ENCODE measurements at regions of chr2 and their contacts with region 1.

Region 1: GRCh38 chr2:161586517-161587167 is 37.6 kb upstream of the SLC4A10 start:
- DNase-seq: no peak
- H3K4me3 Mint-ChIP-seq: no peak overlapping the region
- H3K27ac Mint-ChIP-seq: no peak overlapping the region
- H3K4me1 Mint-ChIP-seq: no peaks in the 10 kb centered on the region
- H3K27me3 Mint-ChIP-seq: no peaks in the 10 kb centered on the region

Region 2: DNA sequence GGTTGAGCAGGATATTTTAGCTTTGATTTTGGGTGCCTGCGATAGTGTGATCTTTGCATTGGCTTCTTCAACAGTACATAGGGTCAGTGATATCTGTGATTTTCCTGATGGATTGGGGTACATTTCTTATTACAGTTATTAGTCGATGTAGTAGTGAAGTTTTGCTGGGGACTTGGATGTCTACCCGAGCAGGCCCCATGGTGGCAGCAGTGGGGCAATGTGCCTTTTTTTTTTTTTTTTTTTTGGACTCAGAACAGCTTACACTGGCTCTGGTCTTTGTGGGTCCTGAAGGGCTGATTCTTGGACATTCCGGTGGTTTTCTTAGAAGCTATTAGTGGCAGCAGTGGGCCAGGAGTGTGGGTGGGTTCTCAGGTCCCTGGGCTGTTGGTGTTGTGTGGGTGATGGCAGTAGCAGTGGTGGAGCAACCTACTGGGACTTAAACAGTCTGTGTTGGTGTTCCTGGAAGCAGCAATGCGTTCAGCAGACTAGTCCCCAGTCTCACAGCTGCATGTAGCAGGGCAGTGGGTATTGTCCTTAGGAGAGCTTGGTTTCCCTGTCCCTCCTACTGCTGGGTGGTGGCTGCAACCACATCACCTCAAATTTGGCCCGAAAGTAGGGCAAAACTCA is 16.1 kb before region 1 on chr2:
- CTCF ChIA-PET with region 1: interaction called, 12 read pairs
- POLR2A ChIA-PET with region 1: no interaction called
- intact Hi-C with region 1: no loop called
- DNase-seq: no peak
- H3K4me3 Mint-ChIP-seq: no peak overlapping the region
- H3K27ac Mint-ChIP-seq: no peak overlapping the region
- H3K4me1 Mint-ChIP-seq: peaks cover 13% of the 10 kb centered on the region
- H3K27me3 Mint-ChIP-seq: peaks cover 4% of the 10 kb centered on the region

Region 3: GRCh38 chr2:161946489-161947107 is 360.0 kb after region 1 on chr2:
- CTCF ChIA-PET with region 1: interaction called, 116 read pairs
- POLR2A ChIA-PET with region 1: no interaction called
- intact Hi-C with region 1: loop called (anchors 1 kb)
- DNase-seq: no peak
- H3K4me3 Mint-ChIP-seq: no peak overlapping the region
- H3K27ac Mint-ChIP-seq: no peak overlapping the region
- H3K4me1 Mint-ChIP-seq: peaks cover 6% of the 10 kb centered on the region
- H3K27me3 Mint-ChIP-seq: no peaks in the 10 kb centered on the region

Region 4: DNA sequence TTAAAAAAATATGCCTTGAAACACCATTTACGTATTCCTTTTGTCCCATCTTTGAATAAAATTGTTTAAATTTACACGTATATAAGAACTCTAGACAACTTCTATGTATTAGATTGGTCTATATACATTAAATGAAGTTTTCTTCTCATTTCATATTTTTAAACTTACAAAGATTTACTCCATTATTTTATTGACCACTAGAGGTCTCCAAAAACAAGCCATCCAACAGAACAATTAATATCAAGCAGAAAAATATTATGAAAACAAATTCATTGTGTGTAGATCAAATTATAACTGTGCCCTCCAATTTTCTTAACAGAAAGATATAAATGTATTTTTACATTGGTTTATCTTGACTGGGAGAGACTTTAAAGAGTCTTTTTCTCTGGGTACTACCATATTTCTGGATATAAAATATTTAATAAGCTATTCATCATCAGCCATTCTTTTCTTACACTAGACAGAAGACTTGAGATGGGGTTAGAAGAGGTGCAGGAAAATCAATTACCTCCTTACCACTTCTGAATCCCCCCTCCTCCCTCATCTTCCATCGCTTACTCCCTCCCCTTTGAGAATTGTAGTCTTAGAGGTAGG is 420.9 kb after region 1 on chr2:
- CTCF ChIA-PET with region 1: no interaction called
- POLR2A ChIA-PET with region 1: no interaction called
- intact Hi-C with region 1: loop called (anchors 5 kb)
- DNase-seq: no peak
- H3K4me3 Mint-ChIP-seq: no peak overlapping the region
- H3K27ac Mint-ChIP-seq: no peak overlapping the region
- H3K4me1 Mint-ChIP-seq: peaks cover 37% of the 10 kb centered on the region
- H3K27me3 Mint-ChIP-seq: no peaks in the 10 kb centered on the region

Measured in activated CD4-positive, alpha-beta memory T cell treated with anti-CD3 and anti-CD28 coated beads for 36 hours (primary cell).